IMR-90 (cell line): ENCODE measurements at regions of chr4 and their contacts with region 1.

Region 1: GRCh38 chr4:142984871-142985585 is 138.9 kb upstream of the INPP4B start:
- DNase-seq: peak; percentile 17
- ATAC-seq: peak; percentile 44
- H3K4me3 ChIP-seq: no peak overlapping the region
- H3K27ac ChIP-seq: no peak overlapping the region
- H3K4me1 ChIP-seq: no peaks in the 10 kb centered on the region
- H3K27me3 ChIP-seq: peaks cover 5% of the 10 kb centered on the region
- CTCF ChIP-seq: peak; percentile 43
- POLR2A ChIP-seq: no peak
- RAD21 ChIP-seq: peak; percentile 35

Region 2: GRCh38 chr4:142961866-142962265 is 23.2 kb before region 1 on chr4:
- CTCF ChIA-PET with region 1: no interaction called
- POLR2A ChIA-PET with region 1: no interaction called
- dilution Hi-C with region 1: no loop called
- in situ Hi-C with region 1: no loop called
- intact Hi-C with region 1: loop called (anchors 2 kb)
- DNase-seq: no peak
- ATAC-seq: no peak
- H3K4me3 ChIP-seq: no peak overlapping the region
- H3K27ac ChIP-seq: no peak overlapping the region
- H3K4me1 ChIP-seq: no peaks in the 10 kb centered on the region
- H3K27me3 ChIP-seq: no peaks in the 10 kb centered on the region
- CTCF ChIP-seq: no peak
- POLR2A ChIP-seq: no peak
- RAD21 ChIP-seq: no peak

Region 3: GRCh38 chr4:143085224-143085623 is 100.2 kb after region 1 on chr4:
- CTCF ChIA-PET with region 1: interaction called, 4 read pairs
- POLR2A ChIA-PET with region 1: no interaction called
- dilution Hi-C with region 1: no loop called
- in situ Hi-C with region 1: no loop called
- intact Hi-C with region 1: loop called (anchors 2 kb)
- DNase-seq: peak; percentile 8
- ATAC-seq: peak; percentile 40; the same call in 1 of the 2 replicates
- H3K4me3 ChIP-seq: no peak overlapping the region
- H3K27ac ChIP-seq: no peak overlapping the region
- H3K4me1 ChIP-seq: no peaks in the 10 kb centered on the region
- H3K27me3 ChIP-seq: no peaks in the 10 kb centered on the region
- CTCF ChIP-seq: peak; percentile 41
- POLR2A ChIP-seq: no peak
- RAD21 ChIP-seq: peak; percentile 46

Region 4: GRCh38 chr4:143184217-143185116 is 199.4 kb after region 1 on chr4 and contains the start of gene USP38:
- CTCF ChIA-PET with region 1: no interaction called
- POLR2A ChIA-PET with region 1: no interaction called
- dilution Hi-C with region 1: no loop called
- in situ Hi-C with region 1: no loop called
- intact Hi-C with region 1: loop called (anchors 2 kb)
- DNase-seq: peak; percentile 94
- ATAC-seq: peak; percentile 88
- H3K4me3 ChIP-seq: peak within 1 kb of the TSS; percentile 74
- H3K27ac ChIP-seq: peak within 1 kb of the TSS; percentile 87
- H3K4me1 ChIP-seq: no peaks in the 10 kb centered on the region
- H3K27me3 ChIP-seq: no peaks in the 10 kb centered on the region
- CTCF ChIP-seq: peak; percentile 14; the same call in 1 of the 2 replicates
- POLR2A ChIP-seq: no peak; the same call in 1 of the 2 replicates
- RAD21 ChIP-seq: no peak
- total RNA-seq, gene USP38: 16.4 and 17.0 TPM in 2 replicates